Prostate gland (tissue), 2 donors: ENCODE measurements at regions of chr6 and their contacts with region 1.

Region 1: GRCh38 chr6:41591859-41592502 is 45.8 kb downstream of the FOXP4 start:
- DNase-seq: peak; percentile 64
- H3K4me3 ChIP-seq: no peak overlapping the region
- H3K27ac ChIP-seq: no peak overlapping the region
- H3K4me1 ChIP-seq: no peaks in the 10 kb centered on the region
- H3K27me3 ChIP-seq: no peaks in the 10 kb centered on the region
- CTCF ChIP-seq: peak; percentile 91 to 98 (median 94)
- POLR2A ChIP-seq: no peak

Region 2: GRCh38 chr6:41416501-41416837 is 175.5 kb before region 1 on chr6:
- intact Hi-C with region 1: loop called (anchors 2 kb)
- DNase-seq: no peak
- H3K4me3 ChIP-seq: no peak overlapping the region
- H3K27ac ChIP-seq: no peak overlapping the region
- H3K4me1 ChIP-seq: no peaks in the 10 kb centered on the region
- H3K27me3 ChIP-seq: no peaks in the 10 kb centered on the region
- CTCF ChIP-seq: no peak
- POLR2A ChIP-seq: no peak

Region 3: GRCh38 chr6:41463062-41463930 is 128.7 kb before region 1 on chr6:
- intact Hi-C with region 1: loop called (anchors 1 kb)
- DNase-seq: peak; percentile 63
- H3K4me3 ChIP-seq: no peak overlapping the region
- H3K27ac ChIP-seq: no peak overlapping the region
- H3K4me1 ChIP-seq: no peaks in the 10 kb centered on the region
- H3K27me3 ChIP-seq: no peaks in the 10 kb centered on the region
- CTCF ChIP-seq: peak; percentile 32 to 82 (median 78)
- POLR2A ChIP-seq: no peak

Region 4: DNA sequence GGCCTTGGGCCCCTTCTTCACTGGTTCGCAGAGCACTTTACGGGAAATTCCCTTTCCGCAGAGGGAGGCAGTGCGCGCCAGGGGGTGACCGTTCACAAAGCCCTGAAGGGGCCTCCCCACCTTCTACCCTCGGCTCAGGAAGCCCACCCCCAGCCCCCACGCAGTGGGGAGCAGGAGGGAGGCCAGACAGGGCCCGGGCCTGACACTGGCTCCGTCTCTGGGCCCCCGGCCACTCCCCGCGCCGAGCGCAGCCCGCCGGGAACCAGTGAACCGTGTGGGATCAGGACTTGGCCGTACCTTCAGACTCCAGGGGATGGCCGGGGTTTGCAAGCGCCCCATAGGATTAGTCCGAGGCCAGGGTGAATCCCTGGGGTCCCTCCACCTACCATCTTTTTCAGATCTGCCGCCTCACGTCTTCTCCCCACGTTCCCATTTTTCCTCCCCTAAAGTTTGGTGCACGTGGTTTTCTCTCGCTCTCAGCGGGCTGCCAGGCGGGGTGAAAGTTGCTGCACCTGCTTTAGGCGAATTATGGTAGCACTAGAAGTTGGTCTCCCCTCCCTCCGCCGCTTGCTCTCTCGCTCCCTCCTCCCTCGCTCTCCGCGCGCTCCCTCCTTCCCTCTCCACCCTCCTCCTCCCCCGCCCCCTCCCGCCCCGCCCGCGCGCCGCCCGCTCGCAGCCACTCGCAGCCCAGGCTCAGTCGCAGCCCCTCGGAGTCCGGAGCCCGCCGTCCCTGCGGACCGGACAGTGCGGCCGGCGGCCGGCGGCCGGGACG is 46.1 kb before region 1 on chr6 and contains the start of gene FOXP4:
- intact Hi-C with region 1: loop called (anchors 5 kb)
- DNase-seq: peak; percentile 93
- H3K4me3 ChIP-seq: peak within 1 kb of the TSS; percentile 59 to 90
- H3K27ac ChIP-seq: peak within 1 kb of the TSS; percentile 72 to 86
- H3K4me1 ChIP-seq: peaks cover 3% of the 10 kb centered on the region
- H3K27me3 ChIP-seq: no peaks in the 10 kb centered on the region
- CTCF ChIP-seq: no peak
- POLR2A ChIP-seq: no peak
- total RNA-seq, gene FOXP4: 24.8 to 53.5 TPM

Region 5: DNA sequence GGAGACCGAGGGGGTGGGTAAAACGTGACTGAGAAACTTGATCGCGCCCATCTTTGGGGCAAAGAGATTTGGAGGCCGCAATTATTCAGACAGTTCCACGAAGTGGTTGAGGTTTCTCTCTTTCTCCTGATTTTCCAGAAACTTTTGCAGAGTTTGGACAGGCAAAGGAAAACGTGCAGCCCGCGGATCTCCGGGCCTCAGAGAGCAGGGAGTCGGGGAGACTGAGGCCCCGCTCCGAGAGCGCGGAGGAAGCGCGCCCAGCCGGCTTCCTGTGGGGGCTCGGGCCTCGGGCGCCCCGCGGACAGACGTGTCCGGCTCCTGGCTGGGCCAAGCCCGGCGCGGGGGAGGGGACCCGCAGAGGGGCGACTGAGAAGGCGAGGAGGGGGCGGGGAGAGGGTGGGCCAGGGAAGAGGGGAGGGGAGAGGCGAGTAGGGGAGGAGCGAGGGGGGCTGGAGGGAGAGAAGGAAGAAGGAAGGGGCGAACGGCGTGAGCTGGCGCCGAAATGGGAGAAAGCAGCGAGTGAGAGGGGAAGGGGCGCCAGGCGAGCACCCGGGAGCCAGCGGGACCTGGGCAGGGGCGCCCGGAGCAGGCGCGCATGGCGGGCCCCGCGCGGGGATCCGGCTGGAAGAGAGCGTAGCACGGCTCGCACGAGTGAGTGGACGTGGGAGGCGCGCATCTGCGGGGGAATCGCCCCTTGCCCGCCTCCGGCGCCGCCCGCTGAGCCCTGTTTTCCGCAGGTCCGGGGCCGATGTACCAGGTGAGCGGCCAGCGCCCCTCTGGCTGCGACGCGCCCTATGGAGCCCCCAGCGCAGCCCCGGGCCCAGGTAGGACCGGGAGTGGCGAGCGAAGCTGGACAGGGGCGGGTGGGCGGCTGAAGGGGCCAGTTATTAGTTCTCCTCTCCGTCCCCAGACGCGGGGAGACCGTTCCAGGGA is 46.3 kb after region 1 on chr6 and contains the start of gene MDFI:
- intact Hi-C with region 1: no loop called
- DNase-seq: no peak
- H3K4me3 ChIP-seq: peak within 1 kb of the TSS; percentile 36 to 47
- H3K27ac ChIP-seq: peak within 1 kb of the TSS; percentile 17 to 58
- H3K4me1 ChIP-seq: peaks cover 4% of the 10 kb centered on the region
- H3K27me3 ChIP-seq: no peaks in the 10 kb centered on the region
- CTCF ChIP-seq: no peak
- POLR2A ChIP-seq: peak; percentile 8
- total RNA-seq, gene MDFI: 31.8 to 77.9 TPM